ENCODE measurements at regions of chr18 and their contacts with region 1.

Region 1: GRCh38 chr18:11937874-11938478 is 29.9 kb upstream of the MPPE1 start:
- DNase-seq: peak; percentile 63 to 83
- H3K4me3 ChIP-seq: no peak overlapping the region
- H3K4me1 ChIP-seq: 0 out of 2 replicates have a peak, but pooled peaks cover 3% of the 10 kb centered on the region
- H3K27me3 ChIP-seq: no peaks in the 10 kb centered on the region

Region 2: GRCh38 chr18:11688989-11689668 is 248.8 kb before region 1 on chr18 and contains the start of gene GNAL:
- in situ Hi-C with region 1: no loop called
- DNase-seq: peak; percentile 77 to 90
- H3K4me3 ChIP-seq: peak within 1 kb of the TSS; percentile 66
- H3K4me1 ChIP-seq: no peaks in the 10 kb centered on the region
- H3K27me3 ChIP-seq: no peaks in the 10 kb centered on the region

Region 3: DNA sequence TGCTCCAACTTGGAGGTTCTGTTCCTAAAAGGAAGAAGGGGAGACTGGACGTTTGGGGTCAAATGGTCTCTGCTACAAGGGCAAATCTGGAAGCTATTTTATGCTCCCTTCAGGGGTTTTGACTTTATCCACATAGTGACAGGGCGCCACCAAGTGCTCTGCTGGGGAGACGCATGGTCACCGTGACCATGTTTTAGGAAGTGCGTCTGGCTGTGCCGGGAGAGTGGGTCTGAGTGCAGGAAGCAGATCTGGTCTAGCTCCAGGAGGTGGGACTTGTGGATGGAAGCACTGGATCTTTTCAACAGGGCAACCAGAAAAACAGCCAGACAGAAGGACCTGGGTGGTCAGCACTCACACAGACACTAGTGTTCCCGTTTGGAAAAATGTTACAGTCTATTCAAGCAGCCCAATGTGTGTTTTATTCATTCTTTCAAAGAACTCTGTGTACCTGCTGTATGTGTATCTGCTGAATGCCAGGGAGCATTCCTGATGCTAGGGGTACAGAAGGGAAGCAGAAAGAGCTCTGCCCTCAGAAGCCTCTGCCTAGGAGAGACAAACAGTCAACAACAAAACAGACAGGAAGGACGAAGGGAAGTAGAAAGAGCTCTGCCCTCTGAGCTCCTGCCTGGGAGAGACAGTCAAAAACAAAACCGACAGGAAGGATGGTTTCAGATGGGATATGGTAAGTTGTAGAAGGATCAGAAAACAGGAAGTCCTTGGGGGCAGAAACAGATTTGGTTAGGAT is 57.6 kb after region 1 on chr18:
- in situ Hi-C with region 1: loop called (anchors 5 kb)
- DNase-seq: peak; percentile 72 to 78
- H3K4me3 ChIP-seq: no peak overlapping the region
- H3K4me1 ChIP-seq: peaks cover 3% of the 10 kb centered on the region; the same call in 1 of the 2 replicates
- H3K27me3 ChIP-seq: no peaks in the 10 kb centered on the region